ENCODE measurements at regions of chr15 and their contacts with region 1.

Region 1: GRCh38 chr15:34783991-34784390 is 11.4 kb downstream of the ACTC1 start:
- DNase-seq: no peak
- H3K4me3 ChIP-seq: no peak overlapping the region
- H3K27ac ChIP-seq: no peak overlapping the region
- H3K4me1 ChIP-seq: no peaks in the 10 kb centered on the region
- H3K27me3 ChIP-seq: peaks cover 5% of the 10 kb centered on the region
- CTCF ChIP-seq: no peak

Region 2: GRCh38 chr15:34709866-34710265 is 74.1 kb before region 1 on chr15:
- intact Hi-C with region 1: loop called (anchors 10 kb)
- DNase-seq: no peak
- H3K4me3 ChIP-seq: no peak overlapping the region
- H3K27ac ChIP-seq: no peak overlapping the region
- H3K4me1 ChIP-seq: peaks cover 10% of the 10 kb centered on the region
- H3K27me3 ChIP-seq: no peaks in the 10 kb centered on the region
- CTCF ChIP-seq: no peak